ENCODE measurements at regions of chr2 and their contacts with region 1.

Region 1: DNA sequence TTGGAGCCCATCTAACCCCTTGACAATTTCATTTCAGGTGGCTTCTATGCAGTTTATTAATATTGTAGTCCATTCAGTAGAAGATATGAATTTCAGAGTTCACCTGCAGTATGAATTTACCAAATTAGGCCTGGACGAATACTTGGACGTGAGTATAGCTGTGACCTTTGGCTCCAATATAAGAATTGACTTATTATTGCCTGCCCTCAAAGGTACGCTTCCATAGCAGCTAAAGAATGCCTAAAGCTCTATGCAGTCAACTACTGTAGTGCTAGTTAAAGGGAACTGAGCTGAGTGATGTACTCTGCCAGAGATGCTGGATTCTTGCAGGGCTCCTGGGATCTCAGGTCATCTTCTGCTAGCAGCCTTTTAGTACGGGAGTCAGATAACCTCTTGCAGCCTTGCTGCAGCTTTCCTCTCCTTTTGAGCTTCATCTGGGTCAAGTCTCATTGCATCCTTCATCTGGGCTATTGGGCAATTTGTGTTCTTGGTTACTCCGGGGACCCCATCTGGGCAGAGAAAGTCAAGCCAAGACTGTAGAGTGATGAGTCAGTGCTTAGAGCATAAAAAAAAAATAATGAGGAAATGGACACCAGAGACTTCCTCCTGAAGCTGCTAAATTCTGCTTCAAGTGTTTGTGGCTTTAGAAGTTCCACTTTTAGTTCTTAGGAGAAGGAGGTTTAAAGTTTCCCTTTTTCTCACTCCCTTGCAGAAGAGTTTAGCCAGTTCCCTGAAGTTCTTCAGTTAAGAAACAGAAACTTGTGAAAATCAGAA is 105.6 kb downstream of the PRPF40A start:
- ATAC-seq: peak in 4 of 8 experiments; percentile 46 to 78 (median 68)
- H3K4me3 ChIP-seq: no peak overlapping the region
- H3K27ac ChIP-seq: no peak overlapping the region
- H3K4me1 ChIP-seq: no peaks in the 10 kb centered on the region

Region 2: DNA sequence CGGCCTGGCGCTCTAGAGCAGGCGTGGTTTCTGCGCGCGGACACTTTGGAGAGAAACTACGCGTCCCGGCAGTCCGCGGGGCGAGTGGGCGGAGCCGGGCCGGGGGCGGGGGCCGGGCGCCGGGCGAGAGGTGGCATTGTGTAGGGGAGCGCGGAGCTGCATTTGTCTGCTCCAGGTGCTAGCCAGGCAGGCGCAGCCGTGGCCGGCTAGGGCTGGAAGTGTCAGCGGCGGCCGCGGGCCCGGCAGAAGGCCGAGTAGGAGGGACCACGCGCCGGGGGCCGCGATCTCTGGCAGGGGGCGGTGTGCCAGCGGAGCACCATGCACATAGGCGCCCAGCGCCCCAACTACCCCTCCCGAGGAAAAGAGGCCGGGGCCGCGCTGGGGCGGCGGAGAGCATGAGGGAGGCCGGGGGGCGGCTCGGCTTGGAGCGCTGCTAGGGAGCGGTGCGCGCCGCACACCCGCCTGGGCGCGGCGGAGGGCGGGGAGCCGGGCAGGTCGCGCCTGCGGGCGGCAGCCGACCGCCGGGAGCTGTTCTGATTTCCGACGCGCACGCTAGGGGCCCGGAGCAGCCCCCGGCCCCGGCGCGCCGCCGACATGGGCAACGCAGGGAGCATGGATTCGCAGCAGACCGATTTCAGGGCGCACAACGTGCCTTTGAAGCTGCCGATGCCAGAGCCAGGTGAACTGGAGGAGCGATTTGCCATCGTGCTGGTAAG is 276.5 kb before region 1 on chr2 and contains the start of gene FMNL2:
- in situ Hi-C with region 1: loop called in 2 of 9 experiments (anchors 25 kb)
- ATAC-seq: peak; percentile 68 to 91 (median 90)
- H3K4me3 ChIP-seq: peak within 1 kb of the TSS; percentile 57 to 99 (median 87)
- H3K27ac ChIP-seq: peak within 1 kb of the TSS; percentile 72 to 76
- H3K4me1 ChIP-seq: peaks cover 8 to 16% of the 10 kb centered on the region in 2 donors
- total RNA-seq, gene FMNL2: 28.9 to 179 (median 64.2) TPM

Region 3: DNA sequence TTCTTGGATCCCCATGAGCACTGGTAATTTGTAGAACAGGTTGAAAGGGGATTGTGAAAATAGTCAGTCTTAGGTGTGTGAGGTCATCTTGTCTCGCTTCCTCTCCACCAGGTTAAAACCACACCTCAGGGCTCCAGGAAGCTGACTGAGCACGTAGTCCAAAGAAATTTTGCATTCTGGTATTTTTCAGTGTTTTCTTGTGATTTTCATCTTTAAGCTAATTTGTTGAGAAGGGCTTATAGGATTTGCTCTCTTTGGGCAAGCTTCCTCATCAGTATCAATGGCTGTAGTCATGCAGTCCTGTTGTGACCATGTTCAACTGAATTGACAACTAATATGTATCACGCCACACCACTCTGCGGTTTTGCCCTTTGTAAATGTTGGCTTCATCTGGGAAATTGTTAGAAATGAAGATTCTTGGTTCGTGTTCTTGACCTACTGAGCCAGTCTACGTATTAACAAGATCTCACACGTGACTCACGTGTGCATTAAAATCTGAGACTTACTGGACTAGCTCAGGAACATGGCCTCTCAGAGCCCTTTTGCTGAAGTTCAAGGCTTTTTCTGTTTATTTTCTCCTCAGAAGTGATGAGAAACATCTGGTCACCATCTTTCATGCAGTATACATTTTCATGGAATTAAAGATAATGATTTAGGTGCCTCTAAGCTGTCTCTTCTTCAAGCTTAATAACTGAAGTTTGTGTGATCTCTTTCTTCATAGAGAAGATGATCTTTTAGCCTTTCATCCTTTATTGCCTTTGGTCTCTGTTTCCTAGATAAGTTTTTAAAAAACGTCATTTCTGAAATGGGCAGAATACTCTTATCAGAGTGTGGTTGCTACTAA is 243.9 kb before region 1 on chr2:
- in situ Hi-C with region 1: no loop called
- ATAC-seq: no peak
- H3K4me3 ChIP-seq: no peak overlapping the region
- H3K27ac ChIP-seq: no peak overlapping the region
- H3K4me1 ChIP-seq: no peaks in the 10 kb centered on the region

Region 4: DNA sequence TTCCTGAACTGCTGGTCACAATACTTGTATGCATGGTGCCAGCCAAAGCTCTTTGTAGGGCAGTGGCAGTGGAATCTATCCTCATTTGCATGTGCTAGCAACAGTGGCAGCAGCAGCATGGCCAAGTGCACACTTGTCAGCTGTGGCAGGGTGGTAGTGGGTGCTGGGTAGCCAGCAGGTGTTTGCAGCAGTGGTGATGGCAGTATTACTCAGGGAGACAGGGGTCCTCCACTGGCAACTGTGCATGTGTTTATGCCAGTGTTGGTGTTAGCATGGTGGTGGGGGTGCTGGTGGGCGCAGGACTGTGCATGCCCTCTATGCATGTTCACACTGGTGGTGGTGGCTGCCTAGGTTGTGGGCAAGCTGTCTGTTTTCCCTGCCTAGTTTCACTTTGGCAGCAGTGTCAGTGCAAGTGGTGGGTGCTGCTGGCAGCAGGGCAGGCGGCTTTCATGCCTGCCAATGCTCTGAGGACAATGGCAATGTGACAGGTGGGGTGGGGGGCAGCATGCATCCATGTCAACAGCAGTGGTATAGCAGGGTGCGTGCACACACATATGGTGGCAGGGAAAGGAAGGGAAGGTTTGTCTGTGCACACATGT is 1301.3 kb after region 1 on chr2:
- in situ Hi-C with region 1: no loop called
- ATAC-seq: no peak
- H3K4me3 ChIP-seq: no peak overlapping the region
- H3K27ac ChIP-seq: no peak overlapping the region
- H3K4me1 ChIP-seq: no peaks in the 10 kb centered on the region

Measured in motor neuron (in vitro differentiated cells).